Activated CD4-positive, alpha-beta memory T cell treated with anti-CD3 and anti-CD28 coated beads for 36 hours (primary cell): ENCODE measurements at regions of chr2 and their contacts with region 1.

Region 1: GRCh38 chr2:158507166-158507565 is 50.4 kb downstream of the PKP4 start:
- DNase-seq: peak; percentile 55
- H3K4me3 Mint-ChIP-seq: no peak overlapping the region
- H3K27ac Mint-ChIP-seq: peak overlapping the region; percentile 11
- H3K4me1 Mint-ChIP-seq: peaks cover 32% of the 10 kb centered on the region
- H3K27me3 Mint-ChIP-seq: no peaks in the 10 kb centered on the region

Region 2: GRCh38 chr2:158191076-158191895 is 315.9 kb before region 1 on chr2:
- CTCF ChIA-PET with region 1: no interaction called
- POLR2A ChIA-PET with region 1: no interaction called
- intact Hi-C with region 1: loop called (anchors 5 kb)
- DNase-seq: peak; percentile 25
- H3K4me3 Mint-ChIP-seq: peak overlapping the region; percentile 9
- H3K27ac Mint-ChIP-seq: peak overlapping the region; percentile 10
- H3K4me1 Mint-ChIP-seq: peaks cover 18% of the 10 kb centered on the region
- H3K27me3 Mint-ChIP-seq: peaks cover 14% of the 10 kb centered on the region

Region 3: DNA sequence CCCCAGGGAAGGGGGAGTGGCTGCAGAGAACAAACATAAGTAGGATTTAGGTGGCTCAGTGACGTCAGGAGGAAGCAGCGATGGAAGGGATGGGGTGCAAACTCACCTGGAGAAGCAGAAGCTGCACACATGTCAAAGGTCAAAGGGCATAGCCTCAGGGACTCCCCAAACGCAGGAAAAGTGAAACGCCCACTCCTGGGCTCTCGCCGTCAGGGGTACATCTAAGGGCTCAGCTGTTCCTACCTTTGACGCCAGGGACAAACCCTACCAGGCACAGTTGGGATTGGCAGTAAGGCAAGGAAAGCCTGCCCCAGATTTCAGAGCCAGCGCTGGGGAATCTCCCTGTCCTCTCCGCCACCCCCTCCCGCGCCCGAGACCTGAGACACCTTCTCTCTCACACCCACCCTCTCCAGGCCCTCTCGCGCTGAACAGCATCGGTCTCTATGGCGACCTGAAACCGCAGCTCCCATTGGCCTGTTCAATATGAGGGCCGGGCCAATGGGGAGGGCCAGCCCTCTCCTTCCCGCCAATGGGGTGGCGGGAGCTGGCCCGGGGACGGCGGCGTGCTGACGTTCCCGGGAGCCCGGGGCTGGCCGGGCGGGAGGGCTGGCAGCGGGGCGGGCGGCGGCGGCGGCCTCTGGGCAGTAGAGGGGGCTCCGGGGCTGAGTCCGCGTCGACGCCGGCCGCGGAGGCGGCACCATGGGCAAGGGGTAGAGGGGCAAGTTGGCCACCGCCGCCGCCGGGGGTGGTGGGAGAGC is 50.7 kb before region 1 on chr2 and contains the starts of genes CCDC148 and PKP4:
- CTCF ChIA-PET with region 1: interaction called, 3 read pairs
- POLR2A ChIA-PET with region 1: no interaction called
- intact Hi-C with region 1: loop called (anchors 2 kb)
- DNase-seq: peak; percentile 94
- H3K4me3 Mint-ChIP-seq: peak within 1 kb of the TSS; percentile 93
- H3K27ac Mint-ChIP-seq: peak within 1 kb of the TSS; percentile 72
- H3K4me1 Mint-ChIP-seq: peaks cover 28% of the 10 kb centered on the region
- H3K27me3 Mint-ChIP-seq: no peaks in the 10 kb centered on the region
- total RNA-seq, gene CCDC148: 0.29 TPM in 1 of 2 experiments, not detected in the other
- total RNA-seq, gene PKP4: 41.4 to 43.1 TPM

Region 4: GRCh38 chr2:158464426-158465281 is 42.5 kb before region 1 on chr2:
- CTCF ChIA-PET with region 1: interaction called, 3 read pairs
- POLR2A ChIA-PET with region 1: no interaction called
- intact Hi-C with region 1: loop called (anchors 2 kb)
- DNase-seq: no peak
- H3K4me3 Mint-ChIP-seq: no peak overlapping the region
- H3K27ac Mint-ChIP-seq: no peak overlapping the region
- H3K4me1 Mint-ChIP-seq: peaks cover 26% of the 10 kb centered on the region
- H3K27me3 Mint-ChIP-seq: no peaks in the 10 kb centered on the region

Region 5: DNA sequence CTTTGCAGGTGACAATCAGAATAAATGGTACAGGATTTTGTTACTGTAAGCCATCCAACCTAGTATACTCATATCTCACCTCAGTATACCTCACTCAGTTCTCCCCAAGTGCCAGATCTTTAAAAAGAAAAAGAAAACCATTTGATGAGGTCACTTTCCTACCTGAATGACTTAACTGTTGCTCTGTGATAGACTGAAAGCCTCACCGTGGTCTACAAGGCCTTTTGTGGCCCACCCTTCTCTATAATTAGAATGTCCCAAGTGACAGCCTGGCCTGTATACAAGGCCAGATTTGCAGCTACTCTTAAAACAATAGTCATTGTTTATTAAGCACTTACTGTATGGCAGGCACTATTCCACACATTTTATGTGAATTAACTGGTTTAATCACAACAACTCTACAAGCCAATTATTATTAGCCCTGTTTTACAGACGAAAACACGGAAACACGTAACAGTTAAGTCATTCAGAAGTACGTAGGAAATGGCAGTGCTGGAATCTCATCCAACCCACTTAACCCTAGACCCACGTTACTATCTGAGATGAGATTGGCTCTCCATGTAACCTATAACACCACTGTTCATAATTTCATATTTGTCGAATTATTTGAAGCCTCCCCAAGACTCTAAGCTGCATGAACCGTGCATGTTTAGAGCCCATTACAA is 22.1 kb before region 1 on chr2:
- CTCF ChIA-PET with region 1: no interaction called
- POLR2A ChIA-PET with region 1: no interaction called
- intact Hi-C with region 1: loop called (anchors 2 kb)
- DNase-seq: no peak
- H3K4me3 Mint-ChIP-seq: no peak overlapping the region
- H3K27ac Mint-ChIP-seq: no peak overlapping the region
- H3K4me1 Mint-ChIP-seq: peaks cover 25% of the 10 kb centered on the region
- H3K27me3 Mint-ChIP-seq: no peaks in the 10 kb centered on the region

Region 6: DNA sequence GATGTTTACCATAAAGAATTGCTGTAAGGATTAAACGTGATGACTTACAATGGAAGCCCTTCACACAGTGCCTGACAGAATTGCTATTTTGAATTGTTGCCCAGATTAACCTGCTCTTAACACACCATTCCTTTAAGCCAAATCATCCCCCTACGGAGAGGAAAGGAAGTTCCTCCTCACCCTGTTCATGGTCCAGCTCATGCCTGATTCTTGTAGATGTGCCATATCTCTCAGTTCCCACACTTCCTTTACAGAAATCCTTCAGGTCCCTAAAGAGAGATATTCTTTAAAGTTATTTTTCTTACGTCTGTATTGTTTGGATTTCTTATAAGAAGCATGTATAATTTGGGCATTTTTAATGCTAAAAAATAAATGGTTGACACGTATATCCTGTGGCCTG is 160.4 kb after region 1 on chr2:
- CTCF ChIA-PET with region 1: no interaction called
- POLR2A ChIA-PET with region 1: no interaction called
- intact Hi-C with region 1: no loop called
- DNase-seq: no peak
- H3K4me3 Mint-ChIP-seq: no peak overlapping the region
- H3K27ac Mint-ChIP-seq: no peak overlapping the region
- H3K4me1 Mint-ChIP-seq: no peaks in the 10 kb centered on the region
- H3K27me3 Mint-ChIP-seq: no peaks in the 10 kb centered on the region